Common myeloid progenitor, CD34-positive (primary cell): ENCODE measurements at regions of chr5 and their contacts with region 1.

Region 1: GRCh38 chr5:139446956-139447779 is 7.8 kb upstream of the DNAJC18 start:
- DNase-seq: no peak
- H3K4me3 ChIP-seq: no peak overlapping the region
- H3K27ac ChIP-seq: no peak overlapping the region
- H3K4me1 ChIP-seq: peaks cover 5 to 23% (median 21%) of the 10 kb centered on the region in 4 experiments
- H3K27me3 ChIP-seq: no peaks in the 10 kb centered on the region

Region 2: GRCh38 chr5:139458580-139459406 is 11.6 kb after region 1 on chr5:
- CTCF ChIA-PET with region 1: interaction called, 10 read pairs
- POLR2A ChIA-PET with region 1: interaction called, 8 read pairs
- DNase-seq: peak; percentile 85 to 96 (median 95)
- H3K4me3 ChIP-seq: no peak overlapping the region
- H3K27ac ChIP-seq: peak overlapping the region in 1 of 2 experiments; percentile 9
- H3K4me1 ChIP-seq: peaks cover 0 to 19% (median 10%) of the 10 kb centered on the region in 4 experiments
- H3K27me3 ChIP-seq: no peaks in the 10 kb centered on the region

Region 3: GRCh38 chr5:139808493-139809139 is 361.4 kb after region 1 on chr5:
- CTCF ChIA-PET with region 1: no interaction called
- POLR2A ChIA-PET with region 1: no interaction called
- DNase-seq: peak in 2 of 3 donors; percentile 60 to 61
- H3K4me3 ChIP-seq: no peak overlapping the region
- H3K27ac ChIP-seq: no peak overlapping the region
- H3K4me1 ChIP-seq: no peaks in the 10 kb centered on the region
- H3K27me3 ChIP-seq: peaks cover 0 to 10% (median 3%) of the 10 kb centered on the region in 5 experiments